ENCODE measurements at regions of chr4 and their contacts with region 1.

Region 1: DNA sequence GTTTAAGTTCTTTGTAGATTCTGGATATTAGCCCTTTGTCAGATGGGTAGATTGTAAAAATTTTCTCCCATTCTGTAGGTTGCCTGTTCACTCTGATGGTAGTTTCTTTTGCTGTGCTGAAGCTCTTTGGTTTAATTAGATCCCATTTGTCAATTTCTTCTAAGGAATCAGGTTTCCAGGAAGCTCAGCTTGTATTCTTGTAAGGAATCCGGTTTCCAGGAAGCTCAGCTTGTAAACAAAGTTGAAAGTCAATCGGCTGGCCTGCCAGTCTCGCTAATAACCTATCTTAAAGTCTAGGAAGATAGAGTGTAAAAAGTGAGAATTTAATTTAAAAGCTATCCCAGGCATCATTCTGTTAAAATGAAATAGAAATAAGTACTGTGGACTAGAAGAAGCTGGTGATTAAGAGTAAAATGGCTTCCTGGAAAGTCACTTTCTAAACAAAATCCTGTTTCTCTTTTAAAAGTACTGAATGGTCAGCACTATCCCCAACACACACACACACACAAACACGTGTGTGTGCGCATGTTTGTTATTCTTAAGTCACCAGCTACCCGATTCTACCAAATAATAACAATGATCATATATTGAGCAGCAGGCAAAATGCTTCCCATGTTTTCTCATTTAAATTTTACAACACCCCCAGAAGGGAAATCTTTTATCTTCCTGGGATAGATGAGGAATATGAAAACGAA is 171.7 kb downstream of the PAPSS1 start:
- DNase-seq: no peak
- ATAC-seq: no peak
- H3K4me3 ChIP-seq: no peak overlapping the region
- H3K4me1 ChIP-seq: no peaks in the 10 kb centered on the region
- CTCF ChIP-seq: no peak

Region 2: DNA sequence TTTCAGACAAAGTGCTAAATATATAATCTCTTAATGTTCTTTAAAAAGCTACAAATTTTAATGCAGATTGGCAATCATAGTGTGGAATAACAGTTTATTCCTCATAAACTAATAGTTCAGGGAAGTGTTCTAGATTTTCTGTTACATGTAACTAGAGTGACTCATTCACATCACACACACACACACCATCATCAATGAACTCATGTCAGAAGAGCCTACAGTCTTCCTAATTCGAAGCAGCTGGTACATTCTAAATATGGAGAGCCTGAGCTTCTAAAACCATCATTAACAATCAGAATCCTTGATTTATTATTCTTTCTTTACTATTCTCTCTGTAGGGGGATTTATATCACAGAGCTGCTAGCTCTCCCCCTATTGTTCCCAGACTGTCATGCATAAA is 561.9 kb before region 1 on chr4:
- intact Hi-C with region 1: no loop called
- DNase-seq: no peak
- ATAC-seq: no peak
- H3K4me3 ChIP-seq: no peak overlapping the region
- H3K4me1 ChIP-seq: no peaks in the 10 kb centered on the region
- CTCF ChIP-seq: no peak

Region 3: GRCh38 chr4:107482521-107482920 is 65.8 kb before region 1 on chr4:
- intact Hi-C with region 1: loop called in 1 of 2 experiments (anchors 5 kb)
- DNase-seq: no peak
- ATAC-seq: no peak
- H3K4me3 ChIP-seq: no peak overlapping the region
- H3K4me1 ChIP-seq: no peaks in the 10 kb centered on the region
- CTCF ChIP-seq: no peak

Region 4: DNA sequence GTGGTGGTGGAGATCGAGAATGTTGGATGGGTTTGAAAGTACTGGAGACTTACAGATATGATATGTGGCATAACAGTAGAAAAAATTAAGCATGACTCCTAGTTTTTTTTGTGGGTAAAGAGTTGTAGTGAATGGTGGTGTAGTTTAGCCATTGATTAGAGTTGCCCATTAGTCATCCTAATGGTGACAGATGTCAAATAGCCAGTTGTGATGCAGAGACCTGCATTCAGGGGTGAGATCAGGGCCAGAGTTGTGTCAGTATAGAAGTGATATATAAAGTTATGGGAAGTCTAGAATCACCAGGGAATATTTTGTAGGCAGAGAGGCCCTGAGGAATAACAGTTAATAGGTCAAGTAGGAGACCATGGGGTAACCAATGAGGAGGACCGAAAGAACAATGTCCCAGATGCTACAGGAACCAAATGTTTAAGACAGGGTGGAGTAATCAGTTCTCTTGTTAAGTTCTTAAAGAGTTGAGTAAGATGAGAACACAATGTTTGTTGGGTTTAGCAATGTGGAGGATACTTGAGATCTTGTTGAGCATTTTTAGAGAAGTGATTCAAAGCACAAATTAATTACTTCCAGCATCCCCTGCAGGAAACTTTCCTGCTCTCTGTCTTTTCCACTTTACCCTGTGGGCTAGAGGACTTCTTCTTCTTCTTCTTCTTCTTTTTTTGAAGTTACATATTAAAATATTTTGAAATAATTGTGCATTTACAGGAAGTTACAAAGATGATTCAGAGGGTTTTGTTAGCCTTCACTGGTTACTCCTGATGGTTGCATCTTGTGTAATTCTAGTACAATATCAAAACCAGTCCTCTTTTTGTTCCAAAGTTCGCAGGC is 289.6 kb after region 1 on chr4:
- intact Hi-C with region 1: no loop called
- DNase-seq: no peak
- ATAC-seq: peak; percentile 21
- H3K4me3 ChIP-seq: no peak overlapping the region
- H3K4me1 ChIP-seq: peaks cover 5% of the 10 kb centered on the region
- CTCF ChIP-seq: no peak